ENCODE measurements at regions of chr1 and their contacts with region 1.

Region 1: DNA sequence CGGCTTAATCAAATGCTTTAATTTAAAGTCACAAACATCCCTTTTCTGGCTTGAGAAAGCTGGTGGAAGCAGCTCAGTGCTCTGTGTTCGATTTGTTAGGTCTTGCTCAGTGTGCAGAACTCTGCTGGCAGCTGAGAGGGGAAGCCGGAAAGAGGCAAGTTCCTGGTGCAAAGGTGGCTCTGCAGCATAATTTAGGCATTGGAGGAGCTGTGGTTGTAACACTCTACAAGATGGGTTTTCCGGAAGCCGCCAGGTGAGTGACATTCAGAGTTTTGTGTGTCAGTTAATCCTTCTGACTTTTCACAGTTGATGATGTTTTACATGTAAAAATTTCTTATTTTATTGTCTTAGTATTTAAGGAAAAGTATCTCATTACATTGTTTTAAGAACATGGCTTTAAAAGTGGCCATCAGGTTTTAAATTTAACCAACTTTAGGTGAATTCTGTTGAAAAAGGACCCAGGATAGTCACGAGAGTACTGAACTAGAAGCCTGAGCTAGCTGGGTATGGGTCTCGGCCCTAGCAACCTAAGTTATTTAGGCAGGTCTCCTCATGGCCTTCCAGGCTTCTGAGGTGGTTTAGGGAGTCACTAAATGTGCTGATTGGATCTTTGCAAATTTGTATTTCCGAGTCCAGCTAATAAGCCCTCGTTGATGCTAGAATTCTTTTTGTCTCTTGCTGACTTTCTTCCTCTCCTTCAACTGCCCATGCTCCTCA is 47.1 kb upstream of the PODN start:
- DNase-seq: peak; percentile 32
- H3K4me3 ChIP-seq: peak overlapping the region; percentile 64
- H3K27me3 ChIP-seq: no peaks in the 10 kb centered on the region
- CTCF ChIP-seq: no peak

Region 2: DNA sequence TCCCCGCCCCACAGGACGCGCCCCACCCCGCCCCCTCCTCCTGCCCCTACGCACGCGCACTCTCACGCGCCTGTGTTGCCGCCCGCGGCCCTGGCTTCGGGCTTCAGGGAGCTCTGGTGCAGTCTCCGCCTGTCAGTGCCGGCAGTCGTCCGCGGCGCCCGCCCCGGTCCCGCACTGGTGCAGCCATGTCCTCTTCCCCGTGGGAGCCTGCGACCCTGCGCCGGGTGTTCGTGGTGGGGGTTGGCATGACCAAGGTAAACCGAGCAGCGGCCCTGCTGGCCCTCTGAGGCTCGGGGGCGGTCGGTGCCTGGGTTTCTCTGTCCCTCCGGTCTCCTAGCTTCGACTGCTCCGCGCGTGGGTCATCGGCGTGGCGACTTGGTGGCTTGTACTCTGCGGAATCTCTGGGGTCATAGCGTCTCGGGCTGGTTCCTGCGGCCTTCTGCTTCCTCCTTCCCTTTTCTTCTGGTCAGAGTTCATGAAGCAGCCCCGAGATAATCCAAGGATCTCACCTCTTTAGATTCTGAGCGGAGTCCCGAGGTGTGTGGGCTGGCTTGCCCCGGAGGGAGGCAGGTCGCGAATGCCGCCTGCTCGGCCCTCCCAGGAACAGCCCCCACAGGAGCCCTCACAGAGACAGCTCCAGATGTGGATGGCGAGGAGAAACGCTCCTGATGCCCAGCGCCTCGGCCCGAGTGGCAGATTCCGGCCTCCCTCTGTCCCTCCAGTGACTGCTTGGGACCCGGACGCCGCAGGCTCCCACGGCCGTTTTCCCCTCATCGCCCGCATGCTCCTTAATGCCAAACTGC is 87.5 kb before region 1 on chr1 and contains the start of gene SCP2:
- CTCF ChIA-PET with region 1: no interaction called
- POLR2A ChIA-PET with region 1: interaction called, 12 read pairs
- DNase-seq: no peak
- H3K4me3 ChIP-seq: peak within 1 kb of the TSS; percentile 55
- H3K27me3 ChIP-seq: no peaks in the 10 kb centered on the region
- CTCF ChIP-seq: no peak
- polyA plus RNA-seq, gene SCP2: 50.0 and 122 TPM in 2 replicates

Region 3: DNA sequence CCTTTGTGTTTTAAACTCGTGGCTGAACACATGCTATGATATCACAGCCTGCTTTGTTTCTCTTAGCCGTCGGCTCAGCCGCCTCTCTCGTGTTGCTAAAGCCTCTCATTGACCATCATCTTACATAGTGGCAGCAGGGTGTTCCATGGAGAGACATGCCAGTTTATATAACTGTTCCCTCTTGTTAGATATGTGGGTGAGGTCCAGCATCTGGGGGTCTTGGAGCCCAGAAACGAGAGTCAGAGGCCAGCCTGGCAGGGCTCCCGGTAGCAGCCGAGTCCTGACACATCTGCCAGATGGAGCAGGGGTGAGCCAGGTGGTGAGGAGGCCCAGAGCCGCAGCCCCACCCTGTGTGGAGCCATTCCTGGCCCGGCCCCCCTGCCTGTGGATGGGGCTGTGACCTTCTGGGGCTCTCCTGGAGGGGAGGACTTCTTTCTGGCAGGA is 58.9 kb after region 1 on chr1:
- CTCF ChIA-PET with region 1: no interaction called
- POLR2A ChIA-PET with region 1: no interaction called
- DNase-seq: no peak
- H3K4me3 ChIP-seq: no peak overlapping the region
- H3K27me3 ChIP-seq: no peaks in the 10 kb centered on the region
- CTCF ChIP-seq: no peak

Measured in BJ (cell line).